AG04450 (cell line): ENCODE measurements at regions of chr5 and their contacts with region 1.

Region 1: GRCh38 chr5:142087920-142088679 is 20.5 kb upstream of the NDFIP1 start:
- DNase-seq: no peak
- H3K4me3 ChIP-seq: no peak overlapping the region
- H3K27ac ChIP-seq: no peak overlapping the region
- H3K27me3 ChIP-seq: peaks cover 8% of the 10 kb centered on the region
- CTCF ChIP-seq: no peak

Region 2: GRCh38 chr5:141618804-141619554 is 469.1 kb before region 1 on chr5 and contains the start of gene DIAPH1:
- CTCF ChIA-PET with region 1: no interaction called
- POLR2A ChIA-PET with region 1: no interaction called
- DNase-seq: peak; percentile 88
- H3K4me3 ChIP-seq: peak within 1 kb of the TSS; percentile 74
- H3K27ac ChIP-seq: peak within 1 kb of the TSS; percentile 47
- H3K27me3 ChIP-seq: no peaks in the 10 kb centered on the region
- CTCF ChIP-seq: peak; percentile 99
- polyA plus RNA-seq, gene DIAPH1: 27.1 and 34.7 TPM in 2 replicates

Region 3: DNA sequence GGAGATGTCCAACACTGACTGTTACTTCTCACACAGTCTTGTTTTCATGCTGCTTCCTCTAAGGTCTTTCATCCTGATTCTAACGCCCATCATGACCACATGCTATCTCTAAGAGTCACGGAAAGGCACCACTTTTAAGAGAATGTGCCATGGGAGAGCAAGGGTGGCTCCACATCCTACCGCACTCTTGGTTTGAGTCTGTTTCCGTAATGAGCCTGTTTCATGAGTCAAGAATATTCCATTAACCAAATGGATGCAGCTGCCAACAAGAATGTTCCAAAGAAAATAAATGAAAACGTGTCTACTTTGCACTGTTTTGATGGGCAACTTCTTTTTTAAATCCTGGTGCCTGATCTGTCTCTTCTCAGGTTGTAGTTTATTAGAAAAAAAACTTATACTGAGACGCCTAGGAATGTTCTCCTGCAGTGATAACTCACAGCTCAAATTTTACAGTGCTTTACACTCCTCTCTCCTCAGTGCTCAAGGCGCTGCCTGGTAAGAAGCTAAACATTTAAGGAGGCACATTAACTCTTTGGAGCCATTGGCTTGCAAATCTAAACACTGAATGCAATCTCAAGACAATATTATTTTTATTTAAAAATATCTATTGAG is 473.5 kb after region 1 on chr5:
- CTCF ChIA-PET with region 1: no interaction called
- POLR2A ChIA-PET with region 1: interaction called, 15 read pairs
- DNase-seq: no peak
- H3K4me3 ChIP-seq: no peak overlapping the region
- H3K27ac ChIP-seq: no peak overlapping the region
- H3K27me3 ChIP-seq: no peaks in the 10 kb centered on the region
- CTCF ChIP-seq: no peak